ENCODE measurements at regions of chr10 and their contacts with region 1.

Region 1: DNA sequence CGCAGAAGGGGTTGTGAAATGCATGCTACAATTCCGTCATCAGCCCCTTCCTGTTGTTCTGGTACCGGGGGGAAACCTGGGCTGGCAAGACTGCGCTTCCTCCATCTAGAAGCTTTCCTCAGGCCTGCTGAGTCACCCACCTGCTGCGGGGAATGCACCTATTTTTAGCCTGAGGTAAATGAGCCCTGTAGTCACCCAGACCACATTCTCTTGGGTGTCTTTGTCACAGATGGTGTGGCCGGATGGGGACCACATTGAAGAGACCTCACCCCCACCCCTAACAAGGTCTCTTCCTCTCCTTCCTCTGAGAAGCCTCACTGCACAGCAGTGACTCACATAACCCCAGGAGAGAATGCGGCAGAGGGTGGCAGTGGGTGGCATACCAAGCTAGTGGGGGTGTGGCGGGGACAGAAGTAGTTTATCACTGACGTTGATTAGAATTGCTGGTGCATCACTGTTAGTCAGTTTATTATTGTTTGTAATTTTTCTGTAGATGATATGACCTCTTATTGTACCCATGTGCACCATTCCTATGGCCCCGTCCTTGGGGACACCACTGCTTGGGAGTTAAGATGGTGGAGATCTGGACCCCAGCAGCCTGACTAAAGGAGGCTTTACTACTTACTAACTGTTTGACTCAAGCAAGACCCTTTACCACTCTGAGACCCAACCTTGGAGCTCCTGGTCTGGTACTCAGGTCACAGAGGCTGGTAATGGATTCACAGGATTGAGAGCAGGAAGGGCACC is 83.0 kb upstream of the DUSP5 start:
- DNase-seq: peak; percentile 88 to 99
- H3K4me3 ChIP-seq: no peak overlapping the region
- H3K27ac ChIP-seq: peak overlapping the region; percentile 100
- H3K4me1 ChIP-seq: peaks cover 83% of the 10 kb centered on the region
- H3K27me3 ChIP-seq: no peaks in the 10 kb centered on the region
- CTCF ChIP-seq: no peak

Region 2: DNA sequence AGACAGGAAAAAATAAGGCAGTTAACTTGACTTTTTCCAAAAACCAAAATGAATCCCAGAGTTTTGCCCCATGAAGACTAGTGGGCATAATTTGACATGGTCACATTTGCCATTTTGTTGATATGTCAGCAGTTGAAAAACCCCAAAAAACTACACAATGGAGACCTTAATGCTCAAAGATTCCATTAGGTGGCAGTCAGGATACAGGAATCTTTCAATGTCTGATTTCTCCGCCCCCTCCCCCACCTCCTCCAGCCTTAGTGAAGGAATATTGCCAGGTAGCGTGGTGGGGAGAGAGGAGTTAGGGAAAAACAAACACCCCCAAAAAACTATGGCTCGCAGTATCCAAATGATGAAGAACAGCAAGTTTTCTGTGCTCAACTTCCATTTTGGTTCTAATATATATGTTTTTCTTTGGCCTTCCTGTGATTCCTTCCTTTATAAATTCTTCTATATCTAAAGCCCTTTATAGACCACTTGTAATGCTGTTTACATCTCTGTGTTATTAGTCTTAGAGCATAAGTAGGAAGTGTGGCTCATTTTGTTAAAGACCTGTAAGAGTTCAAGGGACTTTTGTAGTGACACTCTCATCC is 103.3 kb before region 1 on chr10:
- CTCF ChIA-PET with region 1: interaction called, 3 read pairs
- POLR2A ChIA-PET with region 1: interaction called, 3 read pairs
- intact Hi-C with region 1: loop called (anchors 1 kb)
- DNase-seq: peak; percentile 23 to 47
- H3K4me3 ChIP-seq: no peak overlapping the region
- H3K27ac ChIP-seq: peak overlapping the region; percentile 45
- H3K4me1 ChIP-seq: peaks cover 27% of the 10 kb centered on the region
- H3K27me3 ChIP-seq: no peaks in the 10 kb centered on the region
- CTCF ChIP-seq: peak; percentile 76

Region 3: DNA sequence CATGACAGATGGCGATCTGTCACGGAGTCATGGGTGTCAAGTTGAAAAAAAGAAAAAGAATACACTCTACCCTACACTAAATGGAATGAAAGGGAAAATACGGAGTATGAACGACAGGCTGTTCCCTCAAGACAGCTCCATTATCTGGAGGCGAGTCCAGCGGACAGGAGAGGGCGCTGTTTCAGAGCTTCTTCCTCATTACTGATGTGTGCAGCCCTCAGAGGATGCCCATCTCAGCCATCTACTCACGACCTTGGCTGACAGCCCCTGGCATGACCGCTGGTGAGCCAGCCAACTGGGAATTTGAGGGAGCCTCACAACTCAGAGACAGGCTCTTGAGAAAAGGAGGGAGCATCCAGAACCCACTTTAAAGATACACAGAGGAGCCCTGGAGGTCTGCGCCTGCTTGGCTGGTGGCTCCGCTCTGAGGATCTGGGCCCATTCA is 60.4 kb before region 1 on chr10:
- CTCF ChIA-PET with region 1: interaction called, 3 read pairs
- POLR2A ChIA-PET with region 1: no interaction called
- intact Hi-C with region 1: loop called (anchors 1 kb)
- DNase-seq: peak; percentile 61 to 62
- H3K4me3 ChIP-seq: no peak overlapping the region; the same call in 1 of the 2 replicates
- H3K27ac ChIP-seq: peak overlapping the region; percentile 95
- H3K4me1 ChIP-seq: peaks cover 70% of the 10 kb centered on the region
- H3K27me3 ChIP-seq: no peaks in the 10 kb centered on the region
- CTCF ChIP-seq: peak; percentile 71

Region 4: DNA sequence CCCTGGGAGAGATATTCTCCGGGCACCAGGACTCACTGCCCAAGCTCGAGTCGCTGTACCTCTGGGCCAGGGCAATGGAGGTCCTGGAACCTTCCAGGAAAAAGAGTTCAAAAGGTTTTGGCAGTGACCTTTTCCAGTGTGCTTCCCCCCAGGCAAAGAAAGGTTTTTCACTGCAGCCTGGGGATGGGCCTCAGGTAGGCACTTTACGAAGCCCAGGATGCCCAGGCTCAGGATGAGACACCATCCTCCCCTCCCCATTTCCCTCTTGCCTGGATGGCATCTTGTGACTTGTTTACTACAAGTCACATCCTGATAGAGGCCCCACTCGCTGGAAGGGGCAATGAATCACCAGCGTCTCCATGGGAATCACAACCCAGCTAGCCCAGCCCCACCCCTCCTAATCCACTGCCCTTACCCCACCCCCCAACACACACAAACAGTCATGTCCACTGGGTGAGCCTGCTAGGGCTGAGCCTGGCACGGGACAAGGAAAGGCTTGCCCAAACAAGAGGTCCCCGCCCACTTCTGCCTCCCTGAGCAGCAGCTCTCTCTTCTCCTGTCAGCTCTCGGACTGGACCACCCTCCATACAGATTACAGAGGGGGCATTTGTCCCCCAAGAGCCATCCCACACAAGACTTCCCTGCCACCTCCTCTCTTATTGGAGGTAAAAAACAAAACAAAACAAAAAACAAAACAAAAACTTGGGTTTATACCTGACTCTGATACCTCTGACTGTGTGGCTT is 16.1 kb before region 1 on chr10:
- CTCF ChIA-PET with region 1: no interaction called
- POLR2A ChIA-PET with region 1: interaction called, 5 read pairs
- intact Hi-C with region 1: loop called (anchors 2 kb)
- DNase-seq: peak; percentile 88 to 94
- H3K4me3 ChIP-seq: peak overlapping the region; percentile 41; the same call in 1 of the 2 replicates
- H3K27ac ChIP-seq: peak overlapping the region; percentile 100
- H3K4me1 ChIP-seq: peaks cover 71% of the 10 kb centered on the region
- H3K27me3 ChIP-seq: no peaks in the 10 kb centered on the region
- CTCF ChIP-seq: no peak

Region 5: DNA sequence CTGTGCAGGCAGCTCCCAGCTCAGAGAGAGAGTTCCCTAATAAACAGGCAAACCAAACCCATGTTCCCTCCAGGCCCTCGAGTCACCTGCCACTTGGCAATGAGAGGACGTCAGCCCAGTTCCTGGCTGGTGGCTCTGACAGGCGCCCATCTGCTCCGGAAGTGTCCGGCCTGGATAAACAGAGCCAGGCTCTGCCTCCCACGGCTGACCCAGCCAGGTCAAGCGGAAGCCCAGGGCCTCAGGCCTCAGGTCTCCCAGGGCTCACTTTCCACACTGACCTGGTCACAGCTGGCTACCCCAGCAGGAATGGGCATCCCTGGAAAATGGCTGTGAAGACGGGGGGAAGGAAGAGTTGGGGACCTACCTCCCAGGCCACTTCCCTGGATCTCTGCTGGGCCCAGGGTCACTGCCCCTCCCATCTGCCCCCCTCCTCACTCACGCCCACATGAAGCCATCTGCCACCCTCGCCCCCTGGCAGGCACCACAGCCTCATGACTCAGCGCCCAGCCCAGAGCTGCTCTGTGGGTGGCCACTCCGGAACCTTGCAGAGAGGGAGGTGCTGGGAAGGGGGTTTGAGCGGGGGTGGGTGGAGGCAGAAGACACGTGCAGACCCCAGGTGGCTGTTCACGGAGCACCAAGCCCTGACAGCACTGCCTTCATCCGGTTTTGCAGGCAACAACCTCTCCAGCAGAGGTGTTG is 45.5 kb after region 1 on chr10:
- CTCF ChIA-PET with region 1: no interaction called
- POLR2A ChIA-PET with region 1: no interaction called
- intact Hi-C with region 1: loop called (anchors 1 kb)
- DNase-seq: peak; percentile 69 to 90
- H3K4me3 ChIP-seq: peak overlapping the region; percentile 32; the same call in 1 of the 2 replicates
- H3K27ac ChIP-seq: peak overlapping the region; percentile 87
- H3K4me1 ChIP-seq: peaks cover 66% of the 10 kb centered on the region
- H3K27me3 ChIP-seq: no peaks in the 10 kb centered on the region
- CTCF ChIP-seq: no peak

Region 6: GRCh38 chr10:110547139-110547761 is 132.5 kb after region 1 on chr10:
- CTCF ChIA-PET with region 1: no interaction called
- POLR2A ChIA-PET with region 1: no interaction called
- intact Hi-C with region 1: loop called (anchors 5 kb)
- DNase-seq: no peak
- H3K4me3 ChIP-seq: no peak overlapping the region
- H3K27ac ChIP-seq: no peak overlapping the region
- H3K4me1 ChIP-seq: no peaks in the 10 kb centered on the region
- H3K27me3 ChIP-seq: no peaks in the 10 kb centered on the region
- CTCF ChIP-seq: peak; percentile 83

Region 7: GRCh38 chr10:110783509-110784107 is 368.9 kb after region 1 on chr10:
- CTCF ChIA-PET with region 1: no interaction called
- POLR2A ChIA-PET with region 1: no interaction called
- intact Hi-C with region 1: no loop called
- DNase-seq: no peak
- H3K4me3 ChIP-seq: no peak overlapping the region
- H3K27ac ChIP-seq: no peak overlapping the region
- H3K4me1 ChIP-seq: no peaks in the 10 kb centered on the region
- H3K27me3 ChIP-seq: no peaks in the 10 kb centered on the region
- CTCF ChIP-seq: no peak

Measured in PC-9 (cell line).